ENCODE measurements at regions of chr10 and their contacts with region 1.

Region 1: GRCh38 chr10:97534746-97535367 is 36.1 kb downstream of the UBTD1 start:
- DNase-seq: peak; percentile 47
- H3K4me3 Mint-ChIP-seq: no peak overlapping the region
- H3K27ac Mint-ChIP-seq: no peak overlapping the region
- H3K4me1 Mint-ChIP-seq: no peaks in the 10 kb centered on the region
- H3K27me3 Mint-ChIP-seq: no peaks in the 10 kb centered on the region

Region 2: DNA sequence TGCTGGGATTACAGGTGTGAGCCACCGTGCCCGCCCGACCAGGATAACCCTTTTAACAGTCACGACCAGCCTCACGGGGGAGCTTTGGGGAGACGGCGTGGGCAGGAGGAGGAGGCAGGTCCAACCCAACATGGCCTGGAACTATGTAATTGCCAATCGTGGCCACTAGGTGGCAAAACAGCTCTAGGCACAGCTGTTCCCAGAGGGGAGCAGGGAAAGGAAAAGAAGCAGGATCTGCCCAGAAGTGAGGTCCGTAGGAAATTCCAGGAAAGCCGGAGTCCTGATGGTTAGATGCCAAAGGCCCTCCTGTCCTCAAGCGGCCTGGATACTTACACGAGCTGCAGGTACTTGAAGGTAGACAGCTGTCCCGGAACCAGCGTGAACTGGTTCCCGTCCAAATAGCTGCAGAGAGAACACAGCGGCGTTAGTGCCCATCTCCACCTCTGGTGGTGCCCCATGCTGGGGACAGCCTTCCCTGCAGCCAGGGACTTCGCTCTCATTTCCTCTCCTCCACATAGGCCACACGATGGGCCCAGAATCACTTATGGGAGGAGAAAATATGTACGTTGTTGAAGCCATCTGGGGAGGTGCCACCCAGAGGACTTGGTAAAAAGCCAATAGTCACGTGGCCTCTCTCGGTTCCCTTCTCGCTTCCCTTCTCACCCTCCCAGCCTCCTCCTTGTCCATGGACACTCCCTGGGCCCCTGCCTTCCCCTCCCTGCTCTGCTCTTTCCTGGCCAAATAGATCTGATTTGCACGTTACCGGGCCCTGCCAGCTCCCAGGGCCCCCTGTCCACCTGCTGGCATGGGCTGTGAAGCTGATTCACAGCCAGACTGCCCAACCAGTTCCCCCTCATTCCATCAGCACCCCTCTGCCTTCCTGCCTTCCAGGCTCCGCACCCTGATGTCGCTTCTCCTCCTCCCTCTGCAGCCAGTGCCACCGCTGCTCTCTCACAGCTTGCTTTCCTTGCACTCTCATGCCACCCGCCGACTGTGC is 497.2 kb before region 1 on chr10:
- CTCF ChIA-PET with region 1: no interaction called
- DNase-seq: peak; percentile 80
- H3K4me3 Mint-ChIP-seq: peak overlapping the region; percentile 43
- H3K27ac Mint-ChIP-seq: no peak overlapping the region
- H3K4me1 Mint-ChIP-seq: peaks cover 11% of the 10 kb centered on the region
- H3K27me3 Mint-ChIP-seq: peaks cover 10% of the 10 kb centered on the region

Region 3: GRCh38 chr10:97520978-97521761 is 13.7 kb before region 1 on chr10:
- CTCF ChIA-PET with region 1: interaction called, 14 read pairs
- DNase-seq: no peak
- H3K4me3 Mint-ChIP-seq: no peak overlapping the region
- H3K27ac Mint-ChIP-seq: no peak overlapping the region
- H3K4me1 Mint-ChIP-seq: no peaks in the 10 kb centered on the region
- H3K27me3 Mint-ChIP-seq: peaks cover 51% of the 10 kb centered on the region

Measured in activated naive CD4-positive, alpha-beta T cell treated with anti-CD3 and anti-CD28 coated beads, Interleukin-2, amount 10 ng/mL, durations not matched to agents 7 days and 5 days (primary cell).